Astrocyte of the cerebellum (primary cell): ENCODE measurements at regions of chr21 and their contacts with region 1.

Region 1: GRCh38 chr21:26461500-26461899 is 111.6 kb downstream of the CYYR1 start:
- DNase-seq: no peak
- H3K4me3 ChIP-seq: no peak overlapping the region
- CTCF ChIP-seq: no peak

Region 2: DNA sequence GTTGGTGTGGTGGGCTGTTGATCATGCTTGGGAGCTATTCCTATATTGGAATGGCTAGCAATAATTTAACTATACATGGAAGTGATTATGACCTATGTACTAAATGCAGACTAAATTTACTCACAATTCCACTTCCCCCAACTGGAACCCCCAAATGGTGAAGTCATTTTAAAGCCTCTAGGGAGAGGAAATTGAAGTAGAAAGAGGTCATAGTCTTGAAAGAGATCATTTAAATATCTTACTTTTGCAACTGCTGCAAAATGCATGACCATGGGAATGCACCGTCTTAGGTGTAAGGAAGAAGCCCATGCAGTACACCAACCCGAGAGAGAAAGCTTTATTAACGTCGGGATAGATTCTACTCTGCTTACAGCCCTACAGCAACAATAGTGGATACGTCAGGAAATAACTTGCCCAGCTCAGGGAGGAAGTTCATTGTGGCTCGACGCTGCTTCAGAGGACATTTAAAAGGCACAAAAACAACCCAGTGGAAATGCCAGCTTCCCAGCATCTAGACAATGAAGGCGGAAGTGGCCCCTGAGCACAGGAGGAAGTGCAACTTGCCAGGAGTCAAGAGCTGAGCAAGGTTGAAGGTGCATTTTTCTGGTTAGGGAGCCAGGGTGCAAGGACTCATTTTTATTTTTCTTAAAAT is 85.1 kb after region 1 on chr21:
- in situ Hi-C with region 1: loop called (anchors 5 kb)
- DNase-seq: no peak
- H3K4me3 ChIP-seq: no peak overlapping the region
- CTCF ChIP-seq: no peak